Caco-2 (cell line): ENCODE measurements at regions of chr14 and their contacts with region 1.

Region 1: GRCh38 chr14:49479432-49479831 is 106.7 kb downstream of the RPS29 start:
- DNase-seq: peak; percentile 41 to 55
- H3K4me3 ChIP-seq: no peak overlapping the region
- H3K4me3 Mint-ChIP-seq: peak overlapping the region; percentile 33
- H3K27ac Mint-ChIP-seq: peak overlapping the region; percentile 55
- H3K4me1 ChIP-seq: peaks cover 31% of the 10 kb centered on the region
- H3K4me1 Mint-ChIP-seq: peaks cover 30% of the 10 kb centered on the region
- H3K27me3 ChIP-seq: no peaks in the 10 kb centered on the region
- H3K27me3 Mint-ChIP-seq: no peaks in the 10 kb centered on the region
- CTCF ChIP-seq: no peak

Region 2: GRCh38 chr14:49405291-49405690 is 74.1 kb before region 1 on chr14:
- CTCF ChIA-PET with region 1: no interaction called
- POLR2A ChIA-PET with region 1: no interaction called
- intact Hi-C with region 1: no loop called
- DNase-seq: no peak
- H3K4me3 ChIP-seq: no peak overlapping the region
- H3K4me3 Mint-ChIP-seq: no peak overlapping the region
- H3K27ac Mint-ChIP-seq: no peak overlapping the region
- H3K4me1 ChIP-seq: no peaks in the 10 kb centered on the region
- H3K4me1 Mint-ChIP-seq: no peaks in the 10 kb centered on the region
- H3K27me3 ChIP-seq: no peaks in the 10 kb centered on the region
- H3K27me3 Mint-ChIP-seq: peaks cover 5% of the 10 kb centered on the region
- CTCF ChIP-seq: no peak

Region 3: DNA sequence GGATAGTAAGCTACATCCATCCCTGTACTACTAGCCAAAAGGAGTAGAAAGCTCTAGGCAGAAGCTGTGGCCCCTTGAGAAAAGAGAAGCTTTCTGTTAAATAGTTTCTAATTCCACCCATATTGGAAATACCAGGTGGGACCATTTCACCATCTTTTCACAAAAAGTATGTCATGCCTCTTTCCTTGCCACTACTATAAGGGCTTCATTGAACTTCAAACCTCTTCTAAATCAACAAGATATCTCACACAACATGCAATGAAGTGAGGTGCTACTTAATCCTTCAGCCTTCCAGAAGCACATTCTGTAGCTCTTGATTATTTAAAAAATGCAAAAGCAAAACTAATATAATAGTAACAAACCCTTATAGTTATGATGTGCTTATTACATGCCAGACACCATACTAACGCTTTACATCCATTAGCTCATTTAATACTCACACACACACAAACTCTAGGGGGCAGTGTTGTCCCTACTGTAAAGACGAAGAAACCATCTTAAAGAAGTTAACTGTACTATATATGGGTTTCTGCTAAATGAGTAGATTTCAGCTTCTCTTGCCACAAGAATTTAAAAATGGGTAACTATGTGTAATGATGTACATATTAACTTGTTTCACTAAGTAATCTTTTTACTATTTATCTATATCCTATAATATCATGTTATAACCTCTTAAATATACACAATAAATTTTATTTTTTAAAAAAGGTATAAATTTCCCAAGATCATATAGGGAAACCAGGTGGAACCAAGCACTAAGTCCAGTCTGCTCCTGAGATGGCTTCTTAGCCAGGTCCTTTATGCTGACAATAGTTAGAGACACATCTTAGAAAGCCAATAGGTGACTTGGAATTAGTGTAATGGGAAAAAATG is 17.7 kb before region 1 on chr14:
- CTCF ChIA-PET with region 1: interaction called, 22 read pairs
- POLR2A ChIA-PET with region 1: no interaction called
- intact Hi-C with region 1: no loop called
- DNase-seq: peak; percentile 52 to 76
- H3K4me3 ChIP-seq: no peak overlapping the region
- H3K4me3 Mint-ChIP-seq: no peak overlapping the region
- H3K27ac Mint-ChIP-seq: no peak overlapping the region
- H3K4me1 ChIP-seq: peaks cover 6% of the 10 kb centered on the region; the same call in 1 of the 2 replicates
- H3K4me1 Mint-ChIP-seq: no peaks in the 10 kb centered on the region
- H3K27me3 ChIP-seq: no peaks in the 10 kb centered on the region
- H3K27me3 Mint-ChIP-seq: no peaks in the 10 kb centered on the region
- CTCF ChIP-seq: peak; percentile 55 to 60

Region 4: GRCh38 chr14:49497725-49498348 is 18.4 kb after region 1 on chr14:
- CTCF ChIA-PET with region 1: interaction called, 6 read pairs
- POLR2A ChIA-PET with region 1: no interaction called
- intact Hi-C with region 1: loop called (anchors 2 kb)
- DNase-seq: peak in 1 of 2 experiments; percentile 69
- H3K4me3 ChIP-seq: no peak overlapping the region
- H3K4me3 Mint-ChIP-seq: no peak overlapping the region
- H3K27ac Mint-ChIP-seq: no peak overlapping the region
- H3K4me1 ChIP-seq: no peaks in the 10 kb centered on the region
- H3K4me1 Mint-ChIP-seq: peaks cover 13% of the 10 kb centered on the region
- H3K27me3 ChIP-seq: no peaks in the 10 kb centered on the region
- H3K27me3 Mint-ChIP-seq: no peaks in the 10 kb centered on the region
- CTCF ChIP-seq: peak; percentile 74 to 84

Region 5: GRCh38 chr14:49505041-49505766 is 25.8 kb after region 1 on chr14:
- CTCF ChIA-PET with region 1: no interaction called
- POLR2A ChIA-PET with region 1: no interaction called
- intact Hi-C with region 1: loop called (anchors 1 kb)
- DNase-seq: peak; percentile 83 to 86
- H3K4me3 ChIP-seq: no peak overlapping the region
- H3K4me3 Mint-ChIP-seq: peak overlapping the region; percentile 52
- H3K27ac Mint-ChIP-seq: peak overlapping the region; percentile 95
- H3K4me1 ChIP-seq: peaks cover 42% of the 10 kb centered on the region
- H3K4me1 Mint-ChIP-seq: peaks cover 37% of the 10 kb centered on the region
- H3K27me3 ChIP-seq: no peaks in the 10 kb centered on the region
- H3K27me3 Mint-ChIP-seq: no peaks in the 10 kb centered on the region
- CTCF ChIP-seq: no peak